Activated CD8-positive, alpha-beta T cell treated with anti-CD3 and anti-CD28 coated beads, Interleukin-2, amount 10 ng/mL, durations not matched to agents 7 days and 5 days (primary cell): ENCODE measurements at regions of chr17 and their contacts with region 1.

Region 1: GRCh38 chr17:48636177-48637018 is 10.2 kb upstream of the HOXB9 start:
- DNase-seq: peak; percentile 80
- ATAC-seq: peak; percentile 90
- H3K4me3 Mint-ChIP-seq: peak overlapping the region; percentile 18
- H3K27ac Mint-ChIP-seq: no peak overlapping the region
- H3K4me1 Mint-ChIP-seq: peaks cover 14% of the 10 kb centered on the region
- H3K27me3 Mint-ChIP-seq: peaks cover 84% of the 10 kb centered on the region

Region 2: DNA sequence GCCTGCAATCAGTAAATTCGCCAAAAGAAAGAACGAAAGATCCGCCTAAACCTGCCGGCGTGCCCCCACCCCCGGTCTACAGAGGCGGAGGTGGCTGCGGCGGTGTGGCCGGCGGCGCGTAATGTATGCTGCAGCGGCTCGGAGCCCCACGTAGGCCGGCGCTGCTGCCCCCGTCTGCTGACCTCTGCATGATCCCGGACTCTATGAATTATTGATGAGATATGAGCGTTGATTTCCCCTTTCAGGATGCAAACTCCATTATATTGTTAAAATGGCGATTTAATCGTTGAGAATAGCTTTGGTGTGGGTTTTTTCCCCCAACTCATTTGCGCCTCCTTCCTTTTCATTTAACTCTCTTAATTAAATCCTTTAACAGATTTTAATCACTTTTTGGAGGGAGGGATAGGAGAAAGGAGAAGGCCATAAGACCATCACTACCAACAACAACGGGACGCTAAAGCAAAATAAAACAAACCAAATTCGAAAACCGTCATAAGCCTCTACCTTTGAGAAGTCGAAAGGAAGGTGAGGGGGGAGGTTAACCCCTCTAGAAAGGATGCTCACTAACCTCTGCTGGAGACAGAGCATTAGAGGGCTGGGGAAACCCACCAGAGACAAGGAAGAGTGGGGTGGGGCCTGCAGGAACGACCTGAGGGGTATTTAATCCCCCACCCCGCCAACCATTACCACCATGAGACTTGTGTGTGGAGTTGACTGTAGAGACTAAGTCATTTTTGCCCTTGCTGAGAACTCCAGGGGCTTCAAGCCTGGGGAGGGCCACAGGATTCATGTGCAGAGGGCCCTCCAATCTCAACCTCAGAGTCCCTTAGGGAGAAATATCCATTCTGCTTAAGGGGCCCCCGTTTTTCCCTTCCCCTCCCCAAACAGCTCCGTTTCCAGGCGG is 49.8 kb before region 1 on chr17:
- CTCF ChIA-PET with region 1: interaction called, 10 read pairs
- POLR2A ChIA-PET with region 1: interaction called, 3 read pairs
- DNase-seq: peak; percentile 49
- ATAC-seq: peak; percentile 27
- H3K4me3 Mint-ChIP-seq: peak overlapping the region; percentile 86
- H3K27ac Mint-ChIP-seq: no peak overlapping the region
- H3K4me1 Mint-ChIP-seq: peaks cover 51% of the 10 kb centered on the region
- H3K27me3 Mint-ChIP-seq: peaks cover 77% of the 10 kb centered on the region

Region 3: DNA sequence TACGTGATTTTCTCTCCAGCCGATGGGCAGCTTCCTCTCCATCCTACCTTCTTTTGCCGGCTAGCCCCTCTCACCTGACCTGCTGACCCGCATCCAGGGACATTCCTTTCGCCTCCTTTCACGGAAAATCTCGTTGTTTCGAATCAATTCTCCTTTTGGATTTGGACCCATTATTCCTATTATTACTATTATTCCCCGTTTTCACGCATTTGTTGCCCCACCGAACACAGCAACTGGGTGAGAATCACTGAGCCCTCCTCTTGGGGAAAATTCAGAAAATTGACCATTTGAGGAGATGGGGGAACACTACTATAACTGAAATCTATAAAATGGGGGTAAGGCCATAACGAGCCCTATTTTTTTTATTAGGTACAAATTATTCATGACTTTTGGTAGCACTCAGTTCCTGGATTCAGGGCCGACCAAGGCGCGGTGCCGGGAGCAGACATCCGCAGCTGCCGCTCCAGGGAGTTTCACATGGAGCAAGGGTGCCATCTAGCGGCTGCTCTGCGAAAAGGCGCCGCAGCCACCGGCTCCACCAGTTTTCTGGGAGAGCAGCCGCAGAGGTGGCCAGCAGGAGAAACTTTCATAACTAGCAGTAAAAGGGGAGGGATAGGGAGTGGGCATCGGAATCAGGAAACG is 18.0 kb before region 1 on chr17:
- CTCF ChIA-PET with region 1: interaction called, 21 read pairs
- POLR2A ChIA-PET with region 1: no interaction called
- DNase-seq: peak; percentile 86
- ATAC-seq: peak; percentile 69
- H3K4me3 Mint-ChIP-seq: peak overlapping the region; percentile 27
- H3K27ac Mint-ChIP-seq: no peak overlapping the region
- H3K4me1 Mint-ChIP-seq: peaks cover 39% of the 10 kb centered on the region
- H3K27me3 Mint-ChIP-seq: peaks cover 87% of the 10 kb centered on the region

Region 4: GRCh38 chr17:48625495-48626244 is 10.7 kb before region 1 on chr17:
- CTCF ChIA-PET with region 1: interaction called, 34 read pairs
- POLR2A ChIA-PET with region 1: interaction called, 7 read pairs
- DNase-seq: peak; percentile 42
- ATAC-seq: peak; percentile 78
- H3K4me3 Mint-ChIP-seq: peak overlapping the region; percentile 73
- H3K27ac Mint-ChIP-seq: no peak overlapping the region
- H3K4me1 Mint-ChIP-seq: peaks cover 18% of the 10 kb centered on the region
- H3K27me3 Mint-ChIP-seq: peaks cover 81% of the 10 kb centered on the region

Region 5: DNA sequence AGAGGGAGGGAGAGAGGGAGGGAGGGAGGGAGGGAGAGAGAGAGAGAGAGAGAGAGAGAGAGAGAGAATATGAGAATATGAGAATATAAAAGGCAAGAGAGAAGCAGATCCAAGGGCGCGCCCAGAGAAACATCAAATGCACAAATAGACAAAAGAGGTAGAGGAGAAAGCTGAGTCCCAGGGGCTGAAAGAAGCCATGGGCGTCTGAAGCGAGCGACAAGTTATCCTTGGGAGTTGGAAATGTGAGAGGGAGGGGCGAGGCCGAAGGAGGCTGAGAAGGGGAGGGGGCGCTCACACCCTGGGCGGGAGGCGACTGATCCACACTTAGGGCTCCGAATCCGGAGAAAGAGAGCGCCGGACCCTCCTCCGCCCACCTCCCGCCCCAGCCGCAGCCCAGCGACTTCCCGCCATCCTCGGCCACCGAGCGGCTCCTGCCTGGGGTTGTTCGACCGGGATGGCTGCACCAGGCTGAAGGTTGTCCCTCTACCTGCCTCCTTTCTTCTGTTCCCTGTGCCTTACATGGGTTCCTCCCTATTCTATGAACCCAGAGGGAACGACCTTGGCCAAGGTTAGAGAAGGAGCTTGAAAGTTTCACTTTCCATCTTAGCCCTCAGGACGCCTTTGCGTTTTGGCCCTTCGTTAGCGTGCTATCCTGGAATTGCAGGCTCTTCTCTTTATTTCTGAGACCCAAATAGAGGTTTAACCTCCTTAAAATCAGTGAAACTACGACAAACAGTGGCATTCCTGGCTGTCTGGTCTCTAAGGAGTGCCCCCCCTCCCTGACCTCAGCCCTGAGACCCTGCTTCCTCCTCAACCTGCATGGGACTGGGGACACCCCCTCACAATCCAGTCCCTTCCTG is 10.9 kb after region 1 on chr17:
- CTCF ChIA-PET with region 1: interaction called, 14 read pairs
- POLR2A ChIA-PET with region 1: no interaction called
- DNase-seq: no peak
- ATAC-seq: peak; percentile 50
- H3K4me3 Mint-ChIP-seq: peak overlapping the region; percentile 74
- H3K27ac Mint-ChIP-seq: peak overlapping the region; percentile 75
- H3K4me1 Mint-ChIP-seq: peaks cover 35% of the 10 kb centered on the region
- H3K27me3 Mint-ChIP-seq: peaks cover 64% of the 10 kb centered on the region

Region 6: DNA sequence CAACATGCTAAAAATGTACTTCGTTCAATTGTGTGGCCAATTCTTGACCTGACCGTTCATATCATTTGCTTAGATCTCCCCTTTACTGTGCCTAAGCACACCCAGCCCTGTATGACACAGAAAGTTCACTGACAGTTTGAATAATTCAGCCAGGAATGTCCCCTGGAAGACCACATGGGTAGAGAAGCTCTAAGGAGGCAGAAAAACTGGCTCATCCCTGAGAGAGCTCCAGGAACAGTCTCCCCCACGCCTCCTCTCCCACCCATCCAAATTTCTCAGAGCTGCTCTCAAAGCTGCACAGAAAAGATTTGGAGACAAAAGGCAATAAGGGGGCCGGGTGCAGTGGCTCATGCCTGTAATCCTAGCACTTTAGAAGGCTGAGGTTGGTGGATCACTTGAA is 74.7 kb after region 1 on chr17:
- CTCF ChIA-PET with region 1: no interaction called
- POLR2A ChIA-PET with region 1: no interaction called
- DNase-seq: no peak
- ATAC-seq: no peak
- H3K4me3 Mint-ChIP-seq: no peak overlapping the region
- H3K27ac Mint-ChIP-seq: no peak overlapping the region
- H3K4me1 Mint-ChIP-seq: no peaks in the 10 kb centered on the region
- H3K27me3 Mint-ChIP-seq: peaks cover 46% of the 10 kb centered on the region

Region 7: GRCh38 chr17:48724251-48725003 is 88.0 kb after region 1 on chr17:
- CTCF ChIA-PET with region 1: interaction called, 10 read pairs
- POLR2A ChIA-PET with region 1: no interaction called
- DNase-seq: peak; percentile 88
- ATAC-seq: peak; percentile 80
- H3K4me3 Mint-ChIP-seq: peak overlapping the region; percentile 45
- H3K27ac Mint-ChIP-seq: no peak overlapping the region
- H3K4me1 Mint-ChIP-seq: peaks cover 42% of the 10 kb centered on the region
- H3K27me3 Mint-ChIP-seq: peaks cover 94% of the 10 kb centered on the region